ENCODE measurements at regions of chr12 and their contacts with region 1.

Region 1: DNA sequence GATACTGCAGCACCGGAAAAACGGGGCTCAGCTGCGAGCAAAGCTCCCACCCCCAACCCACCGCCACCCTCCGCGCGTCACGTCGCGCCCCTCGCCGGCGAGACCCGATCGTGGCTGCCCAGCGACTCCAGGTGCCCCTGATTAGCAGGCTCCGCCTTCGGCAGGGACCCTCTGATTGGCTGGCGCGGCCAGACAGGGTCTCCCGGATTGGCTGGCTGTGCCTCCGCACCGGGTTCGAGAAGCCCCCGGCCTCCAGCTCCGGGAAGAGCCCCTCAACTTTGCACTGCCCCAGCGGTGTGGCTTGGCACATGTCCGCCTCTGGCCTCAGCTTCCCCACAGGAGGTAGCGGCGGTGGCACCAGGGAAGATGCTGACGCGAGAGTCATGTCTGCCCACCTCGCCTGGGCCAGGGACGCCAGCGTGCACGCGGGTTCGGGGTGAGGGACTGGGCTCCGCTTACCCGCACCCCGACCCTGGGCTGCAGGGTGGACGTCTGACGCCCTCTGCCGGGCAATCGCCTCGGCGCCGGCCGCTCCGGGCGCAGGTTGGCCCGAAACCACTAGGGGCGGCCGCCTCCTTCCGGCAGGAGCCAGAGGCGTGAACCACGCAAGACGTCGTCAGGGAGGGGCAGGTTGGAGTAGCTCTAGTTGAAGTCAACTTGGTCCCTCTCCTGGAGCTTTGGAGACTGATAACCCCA is 498 bp upstream of the RHOF start:
- DNase-seq: peak; percentile 98
- ATAC-seq: peak; percentile 19
- H3K4me3 ChIP-seq: peak overlapping the region; percentile 84
- H3K27ac ChIP-seq: peak overlapping the region; percentile 96
- H3K4me1 ChIP-seq: peaks cover 80% of the 10 kb centered on the region
- H3K27me3 ChIP-seq: no peaks in the 10 kb centered on the region
- CTCF ChIP-seq: peak; percentile 99

Region 2: GRCh38 chr12:121334513-121335343 is 459.3 kb before region 1 on chr12:
- CTCF ChIA-PET with region 1: no interaction called
- POLR2A ChIA-PET with region 1: no interaction called
- intact Hi-C with region 1: no loop called
- DNase-seq: peak; percentile 83
- ATAC-seq: peak; percentile 88
- H3K4me3 ChIP-seq: no peak overlapping the region
- H3K27ac ChIP-seq: no peak overlapping the region
- H3K4me1 ChIP-seq: no peaks in the 10 kb centered on the region
- H3K27me3 ChIP-seq: no peaks in the 10 kb centered on the region
- CTCF ChIP-seq: peak; percentile 93

Region 3: DNA sequence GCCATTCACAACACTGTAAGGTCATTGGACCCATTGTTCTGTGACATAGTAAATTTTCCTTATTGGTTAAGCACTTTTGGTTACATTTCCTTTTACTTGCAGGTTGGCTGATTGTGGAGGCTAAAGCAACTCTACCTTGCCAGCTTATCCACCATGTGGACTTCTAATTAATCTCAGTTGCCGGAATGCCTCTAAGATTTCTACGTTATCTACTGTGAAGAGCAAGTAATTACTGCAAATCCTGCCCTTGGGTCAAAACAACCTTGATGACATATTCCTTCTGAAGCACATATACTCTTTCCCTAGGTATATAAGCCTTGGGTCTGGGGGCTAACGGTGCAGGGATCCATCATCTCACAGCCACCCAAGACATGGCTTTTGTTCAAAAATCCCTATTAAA is 105.0 kb before region 1 on chr12:
- CTCF ChIA-PET with region 1: interaction called, 13 read pairs
- POLR2A ChIA-PET with region 1: interaction called, 8 read pairs
- intact Hi-C with region 1: no loop called
- DNase-seq: no peak
- ATAC-seq: no peak
- H3K4me3 ChIP-seq: no peak overlapping the region
- H3K27ac ChIP-seq: no peak overlapping the region
- H3K4me1 ChIP-seq: no peaks in the 10 kb centered on the region
- H3K27me3 ChIP-seq: no peaks in the 10 kb centered on the region
- CTCF ChIP-seq: no peak

Region 4: DNA sequence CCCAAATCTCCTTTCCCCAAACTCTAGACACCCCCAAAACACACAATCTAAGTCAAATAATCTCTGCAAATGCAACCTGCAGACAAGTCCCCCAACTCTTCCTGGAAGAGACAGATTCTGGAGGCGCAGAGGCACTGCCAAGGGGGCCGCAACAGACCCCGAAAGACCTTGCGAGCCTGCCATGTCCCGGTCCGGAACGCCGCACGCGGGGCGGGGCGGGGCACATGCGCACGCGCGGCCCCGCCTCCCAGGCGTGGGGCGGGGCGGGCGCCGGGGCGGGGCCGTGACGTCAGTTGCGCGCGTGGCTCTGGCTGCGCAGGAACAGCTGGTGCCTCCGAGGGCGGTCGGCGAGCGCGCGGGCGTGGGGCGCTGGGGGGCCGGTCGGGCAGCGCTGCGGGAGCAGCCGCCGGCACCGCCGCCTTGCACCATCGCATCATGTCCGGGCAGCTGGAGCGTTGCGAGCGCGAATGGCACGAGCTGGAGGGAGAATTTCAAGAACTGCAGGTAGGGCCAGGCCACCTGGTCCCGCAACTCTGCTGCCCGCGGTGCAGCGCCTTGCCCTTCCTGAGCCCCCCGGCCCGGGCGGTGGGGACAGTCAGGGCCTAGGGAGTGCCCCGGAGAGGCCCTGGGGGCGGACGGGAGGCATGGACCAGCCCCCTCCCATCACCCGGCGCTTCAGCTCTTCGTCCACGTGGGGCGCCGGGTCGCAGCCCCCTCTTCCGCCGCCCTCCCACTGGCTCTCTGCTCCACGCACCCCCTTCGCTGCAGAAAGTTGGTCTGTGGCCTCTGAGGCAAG is 81.3 kb before region 1 on chr12 and contains the start of gene TMEM120B:
- CTCF ChIA-PET with region 1: interaction called, 4 read pairs
- POLR2A ChIA-PET with region 1: no interaction called
- intact Hi-C with region 1: loop called (anchors 5 kb)
- DNase-seq: peak; percentile 87
- ATAC-seq: peak; percentile 75
- H3K4me3 ChIP-seq: peak within 1 kb of the TSS; percentile 80
- H3K27ac ChIP-seq: peak within 1 kb of the TSS; percentile 43
- H3K4me1 ChIP-seq: peaks cover 25% of the 10 kb centered on the region; the same call in 1 of the 2 replicates
- H3K27me3 ChIP-seq: no peaks in the 10 kb centered on the region
- CTCF ChIP-seq: 0 out of 2 replicates have a peak, but pooled peaks have one; percentile 13
- total RNA-seq, gene TMEM120B: 18.5 and 25.4 TPM in 2 replicates

Region 5: DNA sequence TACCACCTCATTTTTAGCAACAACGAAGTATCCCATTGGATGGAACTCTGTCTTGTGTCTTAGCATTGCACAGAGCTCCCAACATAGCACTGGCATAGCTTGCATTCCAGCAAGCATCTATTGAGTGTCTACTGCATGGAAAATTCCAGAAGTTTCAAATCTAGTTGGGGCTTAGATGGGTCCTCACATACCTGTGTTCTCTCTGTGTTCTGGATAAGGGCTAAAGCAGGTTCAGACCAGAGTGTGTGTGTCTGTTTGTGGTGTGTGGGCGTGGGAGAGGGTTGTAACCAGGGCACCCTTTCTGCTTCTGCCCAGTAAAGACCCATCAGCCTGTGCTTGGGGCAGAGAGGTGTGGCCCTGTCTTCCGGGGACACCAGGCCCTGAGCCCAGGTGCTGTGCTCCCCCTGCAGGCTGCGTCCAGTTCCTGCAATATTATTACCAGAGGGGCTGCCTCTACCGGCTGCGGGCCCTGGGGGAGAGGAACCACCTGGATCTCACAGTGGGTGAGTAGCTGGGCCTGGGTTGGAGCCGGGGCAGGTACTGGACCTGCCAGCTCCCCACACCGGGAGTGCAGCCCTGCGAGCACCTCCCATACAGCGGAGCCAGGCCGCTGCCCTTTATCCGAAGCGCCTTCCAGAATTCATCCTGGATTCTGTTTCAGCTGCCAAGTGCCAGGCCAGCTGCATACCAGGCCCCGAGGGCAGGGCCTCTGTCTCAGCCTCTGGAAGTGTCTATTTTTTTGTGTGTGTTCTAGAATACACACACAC is 20.8 kb before region 1 on chr12:
- CTCF ChIA-PET with region 1: interaction called, 45 read pairs
- POLR2A ChIA-PET with region 1: interaction called, 6 read pairs
- intact Hi-C with region 1: loop called (anchors 1 kb)
- DNase-seq: peak; percentile 84
- ATAC-seq: peak; percentile 68
- H3K4me3 ChIP-seq: no peak overlapping the region
- H3K27ac ChIP-seq: no peak overlapping the region
- H3K4me1 ChIP-seq: peaks cover 9% of the 10 kb centered on the region
- H3K27me3 ChIP-seq: no peaks in the 10 kb centered on the region
- CTCF ChIP-seq: peak; percentile 98

Region 6: GRCh38 chr12:121839106-121839992 is 45.4 kb after region 1 on chr12:
- CTCF ChIA-PET with region 1: interaction called, 15 read pairs
- POLR2A ChIA-PET with region 1: no interaction called
- intact Hi-C with region 1: no loop called
- DNase-seq: peak; percentile 100
- ATAC-seq: peak; percentile 96
- H3K4me3 ChIP-seq: peak overlapping the region; percentile 79
- H3K27ac ChIP-seq: peak overlapping the region; percentile 12; the same call in 1 of the 2 replicates
- H3K4me1 ChIP-seq: 0 out of 2 replicates have a peak, but pooled peaks cover 4% of the 10 kb centered on the region
- H3K27me3 ChIP-seq: no peaks in the 10 kb centered on the region
- CTCF ChIP-seq: no peak; the same call in 1 of the 2 replicates

Region 7: GRCh38 chr12:121893961-121894460 is 100.0 kb after region 1 on chr12:
- CTCF ChIA-PET with region 1: interaction called, 20 read pairs
- POLR2A ChIA-PET with region 1: no interaction called
- intact Hi-C with region 1: no loop called
- DNase-seq: peak; percentile 88
- ATAC-seq: peak; percentile 91
- H3K4me3 ChIP-seq: peak overlapping the region; percentile 4; the same call in 1 of the 2 replicates
- H3K27ac ChIP-seq: peak overlapping the region; percentile 37
- H3K4me1 ChIP-seq: peaks cover 28% of the 10 kb centered on the region
- H3K27me3 ChIP-seq: no peaks in the 10 kb centered on the region
- CTCF ChIP-seq: no peak

Region 8: GRCh38 chr12:122021822-122022526 is 228.0 kb after region 1 on chr12 and contains the start of gene BCL7A:
- CTCF ChIA-PET with region 1: no interaction called
- POLR2A ChIA-PET with region 1: no interaction called
- intact Hi-C with region 1: loop called (anchors 10 kb)
- DNase-seq: peak; percentile 76
- ATAC-seq: peak; percentile 56
- H3K4me3 ChIP-seq: peak within 1 kb of the TSS; percentile 93
- H3K27ac ChIP-seq: peak within 1 kb of the TSS; percentile 91
- H3K4me1 ChIP-seq: peaks cover 21% of the 10 kb centered on the region
- H3K27me3 ChIP-seq: no peaks in the 10 kb centered on the region
- CTCF ChIP-seq: no peak
- total RNA-seq, gene BCL7A: 31.6 and 32.5 TPM in 2 replicates

Measured in PC-3 (cell line).